CD4-positive, alpha-beta memory T cell (primary cell): ENCODE measurements at regions of chr5 and their contacts with region 1.

Region 1: GRCh38 chr5:151825445-151825844 is 53.7 kb downstream of the G3BP1 start:
- DNase-seq: peak; percentile 38 to 50 (median 43)
- H3K4me3 ChIP-seq: no peak overlapping the region
- H3K4me3 Mint-ChIP-seq: no peak overlapping the region
- H3K27ac ChIP-seq: no peak overlapping the region
- H3K27ac Mint-ChIP-seq: peak overlapping the region in 1 of 7 donors; percentile 33
- H3K4me1 ChIP-seq: peaks cover 5% of the 10 kb centered on the region
- H3K4me1 Mint-ChIP-seq: peaks cover 9 to 13% (median 12%) of the 10 kb centered on the region in 4 donors
- H3K27me3 ChIP-seq: no peaks in the 10 kb centered on the region
- H3K27me3 Mint-ChIP-seq: no peaks in the 10 kb centered on the region

Region 2: DNA sequence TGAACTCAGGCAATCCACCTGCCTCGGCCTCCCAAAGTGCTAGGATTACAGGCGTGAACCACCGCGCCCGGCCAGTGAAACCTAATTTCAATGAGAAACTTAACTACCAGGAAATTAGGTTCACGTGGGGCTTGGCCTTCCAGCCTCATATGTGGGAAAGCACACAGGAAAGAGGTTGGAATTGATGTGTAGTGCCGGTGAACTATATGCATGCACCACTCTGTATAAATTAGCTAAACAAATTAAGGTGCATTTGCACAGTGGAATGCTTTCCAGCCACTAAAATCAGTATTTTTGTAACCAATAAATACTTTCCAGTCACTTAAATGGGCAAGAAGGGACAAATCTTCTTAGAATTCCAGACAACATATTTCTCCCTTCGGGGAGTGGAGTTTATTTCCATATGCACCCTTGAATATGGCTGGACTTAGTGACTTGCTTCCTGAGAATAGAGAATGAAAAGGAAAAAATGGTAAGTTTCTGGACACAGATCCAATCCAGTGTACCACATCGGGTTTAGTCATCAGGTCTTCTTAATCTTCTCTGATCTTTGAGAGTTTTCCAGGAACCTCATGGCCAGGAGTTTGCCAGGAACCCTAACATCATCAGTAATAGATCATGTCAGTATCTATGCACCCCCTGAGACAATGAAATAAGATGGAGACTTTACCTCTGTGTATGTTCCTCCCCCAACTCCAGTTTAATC is 91.9 kb before region 1 on chr5:
- CTCF ChIA-PET with region 1: no interaction called
- POLR2A ChIA-PET with region 1: no interaction called
- intact Hi-C with region 1: no loop called
- DNase-seq: no peak
- H3K4me3 ChIP-seq: no peak overlapping the region
- H3K4me3 Mint-ChIP-seq: no peak overlapping the region
- H3K27ac ChIP-seq: no peak overlapping the region
- H3K27ac Mint-ChIP-seq: no peak overlapping the region
- H3K4me1 ChIP-seq: no peaks in the 10 kb centered on the region
- H3K4me1 Mint-ChIP-seq: peaks cover 0 to 3% (median 0%) of the 10 kb centered on the region in 4 donors
- H3K27me3 ChIP-seq: no peaks in the 10 kb centered on the region
- H3K27me3 Mint-ChIP-seq: no peaks in the 10 kb centered on the region

Region 3: DNA sequence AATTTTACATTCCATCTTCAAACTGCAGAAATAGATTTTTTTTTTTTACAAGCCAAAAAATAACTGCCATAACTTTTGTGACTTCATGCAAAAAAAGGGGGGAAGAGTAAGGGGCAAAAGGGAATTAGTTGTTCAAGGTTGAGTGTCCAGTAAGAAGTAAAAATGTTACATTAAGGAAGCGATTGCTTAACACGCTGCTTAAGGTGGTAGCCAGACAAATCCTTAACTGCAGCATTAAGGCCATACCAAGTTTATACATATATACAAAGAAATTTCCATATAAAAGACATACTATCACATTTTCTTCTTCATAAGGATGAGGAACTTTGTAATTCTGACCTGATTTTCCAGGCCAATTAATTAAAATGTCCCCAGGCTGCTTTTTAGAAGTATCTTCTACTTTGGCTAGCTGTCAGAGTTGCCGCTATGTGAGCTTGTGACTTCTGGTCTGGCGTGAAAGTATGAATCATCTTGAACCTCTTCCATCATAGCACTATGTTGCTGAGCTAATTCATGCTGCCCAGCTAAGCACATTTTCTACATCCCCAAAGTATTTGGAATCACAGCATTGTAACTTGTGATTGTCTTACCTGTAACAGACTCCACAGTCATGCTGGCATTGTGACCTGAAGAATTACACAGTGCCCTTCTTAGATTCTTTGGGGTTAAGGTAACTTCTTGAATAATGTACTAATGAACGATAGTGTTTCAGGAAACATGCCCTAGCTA is 13.7 kb before region 1 on chr5:
- CTCF ChIA-PET with region 1: interaction called, 44 read pairs
- POLR2A ChIA-PET with region 1: no interaction called
- intact Hi-C with region 1: no loop called
- DNase-seq: no peak
- H3K4me3 ChIP-seq: no peak overlapping the region
- H3K4me3 Mint-ChIP-seq: no peak overlapping the region
- H3K27ac ChIP-seq: no peak overlapping the region
- H3K27ac Mint-ChIP-seq: peak overlapping the region in 2 of 7 donors; percentile 24 to 49
- H3K4me1 ChIP-seq: no peaks in the 10 kb centered on the region
- H3K4me1 Mint-ChIP-seq: peaks cover 0 to 11% (median 6%) of the 10 kb centered on the region in 4 donors
- H3K27me3 ChIP-seq: no peaks in the 10 kb centered on the region
- H3K27me3 Mint-ChIP-seq: no peaks in the 10 kb centered on the region

Region 4: GRCh38 chr5:152164860-152165259 is 339.4 kb after region 1 on chr5:
- CTCF ChIA-PET with region 1: interaction called, 14 read pairs
- POLR2A ChIA-PET with region 1: no interaction called
- intact Hi-C with region 1: no loop called
- DNase-seq: no peak
- H3K4me3 ChIP-seq: no peak overlapping the region
- H3K4me3 Mint-ChIP-seq: no peak overlapping the region
- H3K27ac ChIP-seq: no peak overlapping the region
- H3K27ac Mint-ChIP-seq: no peak overlapping the region
- H3K4me1 ChIP-seq: peaks cover 8% of the 10 kb centered on the region
- H3K4me1 Mint-ChIP-seq: peaks cover 9 to 31% (median 18%) of the 10 kb centered on the region in 4 donors
- H3K27me3 ChIP-seq: no peaks in the 10 kb centered on the region
- H3K27me3 Mint-ChIP-seq: no peaks in the 10 kb centered on the region

Region 5: GRCh38 chr5:152271420-152271819 is 446.0 kb after region 1 on chr5:
- CTCF ChIA-PET with region 1: interaction called, 7 read pairs
- POLR2A ChIA-PET with region 1: no interaction called
- intact Hi-C with region 1: loop called (anchors 1 kb)
- DNase-seq: peak in 3 of 5 donors; percentile 4 to 10 (median 10)
- H3K4me3 ChIP-seq: no peak overlapping the region
- H3K4me3 Mint-ChIP-seq: no peak overlapping the region
- H3K27ac ChIP-seq: no peak overlapping the region
- H3K27ac Mint-ChIP-seq: no peak overlapping the region
- H3K4me1 ChIP-seq: no peaks in the 10 kb centered on the region
- H3K4me1 Mint-ChIP-seq: no peaks in the 10 kb centered on the region
- H3K27me3 ChIP-seq: no peaks in the 10 kb centered on the region
- H3K27me3 Mint-ChIP-seq: no peaks in the 10 kb centered on the region

Region 6: DNA sequence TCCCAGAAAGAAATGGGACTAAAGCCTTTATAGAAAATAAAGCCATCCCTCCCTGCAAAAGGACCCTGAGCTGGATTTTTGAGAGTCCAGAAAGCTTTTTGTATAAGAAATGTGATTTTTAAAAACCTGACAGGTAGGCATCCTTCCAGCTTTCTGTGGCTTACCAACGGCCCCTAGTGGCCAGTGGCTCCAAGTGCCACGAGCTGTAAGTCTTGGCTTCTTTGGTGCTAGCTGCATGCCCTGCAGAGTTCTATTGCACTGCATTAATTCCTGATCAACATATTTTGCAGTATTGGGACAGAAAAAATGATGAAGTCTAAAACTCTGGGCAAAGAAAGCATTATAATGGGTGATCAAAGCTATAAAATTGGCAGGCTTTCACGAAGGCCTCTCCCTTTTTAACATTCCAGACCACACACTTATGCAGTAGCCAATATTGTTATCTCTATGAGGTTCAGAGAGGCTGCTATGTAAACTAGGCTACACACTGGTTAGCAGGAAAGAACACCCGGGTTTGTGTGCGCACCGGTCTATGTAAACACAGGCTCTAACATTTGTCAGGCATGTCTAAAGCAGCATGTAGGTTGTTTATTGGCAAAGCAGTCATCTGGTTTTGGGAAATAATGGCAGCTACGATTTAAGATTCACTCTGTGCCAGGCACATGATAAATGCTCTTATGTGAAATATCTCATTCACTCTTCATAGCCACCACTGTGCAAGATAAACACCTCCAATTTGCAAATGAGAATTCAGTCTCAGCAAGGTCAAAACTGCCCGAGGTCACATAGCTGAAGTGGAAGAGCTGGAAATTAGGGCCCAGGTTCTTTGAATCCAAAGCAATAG is 524.5 kb after region 1 on chr5:
- CTCF ChIA-PET with region 1: interaction called, 67 read pairs
- POLR2A ChIA-PET with region 1: no interaction called
- intact Hi-C with region 1: no loop called
- DNase-seq: peak in 4 of 5 donors; percentile 12 to 30 (median 20)
- H3K4me3 ChIP-seq: no peak overlapping the region
- H3K4me3 Mint-ChIP-seq: no peak overlapping the region
- H3K27ac ChIP-seq: no peak overlapping the region
- H3K27ac Mint-ChIP-seq: no peak overlapping the region
- H3K4me1 ChIP-seq: no peaks in the 10 kb centered on the region
- H3K4me1 Mint-ChIP-seq: no peaks in the 10 kb centered on the region
- H3K27me3 ChIP-seq: no peaks in the 10 kb centered on the region
- H3K27me3 Mint-ChIP-seq: peaks cover 3 to 8% of the 10 kb centered on the region in 2 donors

Region 7: GRCh38 chr5:152505442-152506042 is 680.1 kb after region 1 on chr5:
- CTCF ChIA-PET with region 1: interaction called, 10 read pairs
- POLR2A ChIA-PET with region 1: no interaction called
- intact Hi-C with region 1: no loop called
- DNase-seq: peak in 4 of 5 donors; percentile 29 to 36 (median 34)
- H3K4me3 ChIP-seq: no peak overlapping the region
- H3K4me3 Mint-ChIP-seq: no peak overlapping the region
- H3K27ac ChIP-seq: no peak overlapping the region
- H3K27ac Mint-ChIP-seq: no peak overlapping the region
- H3K4me1 ChIP-seq: no peaks in the 10 kb centered on the region
- H3K4me1 Mint-ChIP-seq: peaks cover 0 to 4% (median 3%) of the 10 kb centered on the region in 4 donors
- H3K27me3 ChIP-seq: peaks cover 5% of the 10 kb centered on the region
- H3K27me3 Mint-ChIP-seq: peaks cover 8 to 15% of the 10 kb centered on the region in 2 donors